Activated CD4-positive, alpha-beta memory T cell treated with anti-CD3 and anti-CD28 coated beads for 36 hours (primary cell): ENCODE measurements at regions of chr16 and their contacts with region 1.

Region 1: DNA sequence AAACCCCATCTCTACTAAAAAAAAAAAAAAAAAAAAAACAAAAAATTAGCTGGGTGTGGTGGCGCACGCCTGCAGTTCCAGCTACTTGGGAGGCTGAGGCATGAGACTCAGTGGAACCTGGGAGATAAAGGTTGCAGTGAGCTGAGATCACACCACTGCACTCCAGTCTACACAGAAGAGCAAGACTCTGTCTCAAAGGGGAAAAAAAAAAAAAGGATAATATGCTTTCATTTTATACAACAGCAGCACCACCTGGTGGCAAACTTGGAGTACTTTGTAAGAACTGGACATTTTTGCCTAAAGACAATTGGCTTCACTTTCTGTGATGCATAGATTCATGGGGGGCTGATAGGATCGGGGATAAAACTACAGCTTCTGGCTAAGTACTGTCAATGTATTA is 8.5 kb downstream of the CHTF8 start:
- DNase-seq: peak; percentile 57
- H3K4me3 Mint-ChIP-seq: no peak overlapping the region
- H3K27ac Mint-ChIP-seq: no peak overlapping the region
- H3K4me1 Mint-ChIP-seq: peaks cover 26% of the 10 kb centered on the region
- H3K27me3 Mint-ChIP-seq: no peaks in the 10 kb centered on the region

Region 2: GRCh38 chr16:68704232-68704867 is 419.6 kb before region 1 on chr16:
- CTCF ChIA-PET with region 1: no interaction called
- POLR2A ChIA-PET with region 1: no interaction called
- intact Hi-C with region 1: loop called (anchors 10 kb)
- DNase-seq: peak; percentile 82
- H3K4me3 Mint-ChIP-seq: no peak overlapping the region
- H3K27ac Mint-ChIP-seq: no peak overlapping the region
- H3K4me1 Mint-ChIP-seq: peaks cover 11% of the 10 kb centered on the region
- H3K27me3 Mint-ChIP-seq: peaks cover 3% of the 10 kb centered on the region

Region 3: GRCh38 chr16:68843482-68844210 is 280.3 kb before region 1 on chr16 and contains the start of gene TANGO6:
- CTCF ChIA-PET with region 1: interaction called, 24 read pairs
- POLR2A ChIA-PET with region 1: no interaction called
- intact Hi-C with region 1: loop called (anchors 1 kb)
- DNase-seq: peak; percentile 96
- H3K4me3 Mint-ChIP-seq: peak within 1 kb of the TSS; percentile 95
- H3K27ac Mint-ChIP-seq: peak within 1 kb of the TSS; percentile 85
- H3K4me1 Mint-ChIP-seq: peaks cover 25% of the 10 kb centered on the region
- H3K27me3 Mint-ChIP-seq: no peaks in the 10 kb centered on the region
- total RNA-seq, gene TANGO6: 25.2 to 25.7 TPM

Region 4: DNA sequence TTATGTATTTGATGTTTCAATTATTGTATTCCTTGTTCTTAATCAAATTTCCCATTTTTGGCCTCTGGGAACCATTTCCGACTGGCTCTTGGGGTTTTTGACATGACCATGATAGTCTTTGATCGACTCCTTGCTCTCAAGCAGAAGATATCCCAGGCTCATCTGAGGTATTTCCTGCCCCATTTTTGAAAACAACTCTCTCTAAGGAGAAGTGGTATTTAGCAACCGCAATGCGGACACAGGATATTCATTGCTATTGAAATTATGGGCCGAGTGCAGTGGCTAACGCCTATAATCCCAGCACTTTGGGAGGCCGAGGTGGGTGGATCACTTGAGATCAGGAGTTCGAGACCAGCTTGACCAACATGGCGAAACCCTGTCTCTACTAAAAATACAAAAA is 275.1 kb before region 1 on chr16:
- CTCF ChIA-PET with region 1: interaction called, 24 read pairs
- POLR2A ChIA-PET with region 1: no interaction called
- intact Hi-C with region 1: loop called (anchors 1 kb)
- DNase-seq: no peak
- H3K4me3 Mint-ChIP-seq: no peak overlapping the region
- H3K27ac Mint-ChIP-seq: no peak overlapping the region
- H3K4me1 Mint-ChIP-seq: peaks cover 29% of the 10 kb centered on the region
- H3K27me3 Mint-ChIP-seq: no peaks in the 10 kb centered on the region

Region 5: GRCh38 chr16:68961778-68962402 is 162.0 kb before region 1 on chr16:
- CTCF ChIA-PET with region 1: no interaction called
- POLR2A ChIA-PET with region 1: no interaction called
- intact Hi-C with region 1: no loop called
- DNase-seq: no peak
- H3K4me3 Mint-ChIP-seq: no peak overlapping the region
- H3K27ac Mint-ChIP-seq: no peak overlapping the region
- H3K4me1 Mint-ChIP-seq: no peaks in the 10 kb centered on the region
- H3K27me3 Mint-ChIP-seq: no peaks in the 10 kb centered on the region

Region 6: GRCh38 chr16:69017036-69017783 is 106.7 kb before region 1 on chr16:
- CTCF ChIA-PET with region 1: no interaction called
- POLR2A ChIA-PET with region 1: no interaction called
- intact Hi-C with region 1: no loop called
- DNase-seq: peak; percentile 16
- H3K4me3 Mint-ChIP-seq: no peak overlapping the region
- H3K27ac Mint-ChIP-seq: no peak overlapping the region
- H3K4me1 Mint-ChIP-seq: peaks cover 10% of the 10 kb centered on the region
- H3K27me3 Mint-ChIP-seq: no peaks in the 10 kb centered on the region

Region 7: DNA sequence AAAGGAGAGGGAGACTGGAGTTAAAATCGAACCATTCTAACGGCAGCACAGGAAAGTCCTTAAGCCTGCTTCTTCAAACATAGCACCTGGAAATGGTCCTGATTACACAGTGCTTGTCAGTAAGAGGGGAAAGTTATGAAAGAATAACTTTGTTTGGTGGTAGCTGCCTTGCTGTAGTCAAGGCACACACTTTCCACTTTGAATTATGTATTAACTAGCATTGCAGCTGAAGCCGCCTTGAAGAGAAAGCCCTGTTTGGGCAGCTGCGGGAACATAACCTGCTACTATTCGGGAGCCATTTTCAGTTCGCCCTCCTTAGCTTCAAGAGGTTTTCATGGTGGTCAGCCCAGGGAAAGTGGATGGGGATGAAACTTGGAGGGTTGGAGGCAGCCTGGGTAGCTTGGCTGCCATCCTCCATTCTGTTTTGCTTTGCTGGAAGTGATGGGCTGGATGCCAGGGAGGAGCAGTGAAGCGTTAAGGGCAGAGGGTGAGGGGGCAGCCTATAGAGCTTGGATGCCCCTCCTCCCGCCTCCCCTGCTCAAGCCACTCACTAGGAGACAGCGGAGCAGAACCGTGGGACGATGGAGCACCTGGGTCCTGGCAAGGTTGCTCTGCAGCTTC is 23.7 kb before region 1 on chr16:
- CTCF ChIA-PET with region 1: interaction called, 11 read pairs
- POLR2A ChIA-PET with region 1: interaction called, 3 read pairs
- intact Hi-C with region 1: no loop called
- DNase-seq: no peak
- H3K4me3 Mint-ChIP-seq: no peak overlapping the region
- H3K27ac Mint-ChIP-seq: no peak overlapping the region
- H3K4me1 Mint-ChIP-seq: no peaks in the 10 kb centered on the region
- H3K27me3 Mint-ChIP-seq: peaks cover 4% of the 10 kb centered on the region

Region 8: DNA sequence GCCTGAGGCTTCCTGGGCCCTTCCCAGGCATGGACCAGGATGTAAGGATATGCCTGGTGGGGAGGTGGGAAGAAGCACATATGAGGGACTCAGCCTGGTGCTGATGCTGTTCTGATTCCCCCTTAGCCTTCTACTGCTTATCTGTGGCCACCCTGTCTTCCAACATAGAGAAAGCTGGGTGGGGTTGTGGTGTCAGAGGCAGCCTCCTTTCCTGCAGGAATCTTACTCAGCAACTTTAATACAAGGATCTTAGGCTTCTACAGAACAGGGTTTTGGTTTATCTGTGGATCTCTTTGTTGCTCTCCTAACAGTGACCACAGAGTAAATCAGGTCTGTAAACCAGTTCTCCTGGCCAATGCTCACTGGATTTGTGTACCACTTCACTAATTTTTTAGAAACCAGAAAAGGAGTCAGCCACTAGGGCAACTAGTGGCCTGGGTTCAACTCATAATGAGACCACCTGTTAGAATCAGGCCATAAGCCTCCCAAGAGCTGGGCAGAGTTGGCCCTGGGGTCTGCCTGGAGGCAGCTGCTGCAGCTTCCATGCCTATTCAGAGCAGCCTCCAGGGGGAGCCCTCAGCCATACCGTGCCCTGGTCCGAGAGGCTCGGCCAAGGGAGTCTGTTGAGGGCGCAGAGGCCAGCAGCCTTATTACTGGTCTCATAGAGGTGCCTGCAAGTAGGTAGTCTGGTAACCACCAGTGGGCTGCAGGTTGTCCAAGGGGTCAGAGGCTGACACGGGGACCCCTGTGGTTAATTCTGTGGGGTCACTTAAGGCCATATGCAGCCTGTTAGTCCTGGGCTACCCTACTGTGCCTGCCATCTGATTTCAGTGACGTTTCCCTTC is 11.4 kb before region 1 on chr16:
- CTCF ChIA-PET with region 1: interaction called, 91 read pairs
- POLR2A ChIA-PET with region 1: interaction called, 3 read pairs
- intact Hi-C with region 1: no loop called
- DNase-seq: peak; percentile 69
- H3K4me3 Mint-ChIP-seq: no peak overlapping the region
- H3K27ac Mint-ChIP-seq: no peak overlapping the region
- H3K4me1 Mint-ChIP-seq: peaks cover 3% of the 10 kb centered on the region
- H3K27me3 Mint-ChIP-seq: peaks cover 13% of the 10 kb centered on the region